ENCODE measurements at regions of chr1 and their contacts with region 1.

Region 1: DNA sequence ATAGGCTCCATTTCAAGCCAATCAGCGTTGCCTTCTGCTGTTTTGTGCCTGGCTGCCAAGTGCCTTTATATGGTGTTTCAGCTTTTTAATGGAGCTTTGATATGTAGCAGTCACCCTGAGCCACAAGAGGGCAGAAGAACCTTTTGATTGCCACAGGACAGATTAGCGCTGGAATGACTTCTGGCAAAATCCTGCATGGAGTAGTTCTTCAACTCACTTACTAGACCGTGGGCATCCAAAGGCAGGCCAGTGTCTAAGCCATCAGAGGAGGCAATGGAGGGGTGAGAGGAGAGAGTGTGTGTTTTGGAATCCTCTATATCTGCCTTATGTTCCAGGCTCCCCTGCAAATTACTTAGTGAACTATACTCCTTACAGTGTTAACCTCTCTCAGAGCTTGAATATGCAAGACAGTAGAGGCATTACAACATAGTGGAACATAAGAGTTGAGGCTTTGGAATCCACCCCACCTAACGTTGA is 56.2 kb downstream of the ST3GAL3 start:
- DNase-seq: no peak

Region 2: GRCh38 chr1:43934101-43934985 is 170.8 kb after region 1 on chr1:
- intact Hi-C with region 1: loop called (anchors 2 to 5 kb)
- DNase-seq: peak; percentile 88